Calu3 (cell line): ENCODE measurements at regions of chr15 and their contacts with region 1.

Region 1: DNA sequence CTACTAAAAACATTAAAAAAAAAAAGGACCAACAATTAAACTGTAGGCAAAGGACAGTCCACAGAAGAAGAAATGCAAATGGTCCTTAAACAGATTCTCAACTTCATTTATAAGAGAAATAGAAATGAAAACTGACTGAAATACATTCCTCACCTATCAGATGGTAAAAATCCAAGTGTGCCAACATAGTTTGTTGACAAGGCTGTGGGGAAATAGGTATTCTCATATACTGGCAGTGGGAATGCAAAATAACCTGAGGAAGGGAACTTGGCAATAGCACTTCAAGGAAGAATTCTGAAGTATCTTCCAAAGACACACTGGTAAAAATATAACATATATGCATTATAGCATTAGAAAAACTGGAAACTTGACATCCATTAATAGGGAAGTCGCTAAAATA is 53.8 kb downstream of the SLC24A1 start:
- DNase-seq: no peak
- H3K4me3 Mint-ChIP-seq: no peak overlapping the region
- H3K27ac Mint-ChIP-seq: no peak overlapping the region
- H3K4me1 Mint-ChIP-seq: no peaks in the 10 kb centered on the region
- H3K27me3 Mint-ChIP-seq: no peaks in the 10 kb centered on the region
- CTCF ChIP-seq: no peak

Region 2: DNA sequence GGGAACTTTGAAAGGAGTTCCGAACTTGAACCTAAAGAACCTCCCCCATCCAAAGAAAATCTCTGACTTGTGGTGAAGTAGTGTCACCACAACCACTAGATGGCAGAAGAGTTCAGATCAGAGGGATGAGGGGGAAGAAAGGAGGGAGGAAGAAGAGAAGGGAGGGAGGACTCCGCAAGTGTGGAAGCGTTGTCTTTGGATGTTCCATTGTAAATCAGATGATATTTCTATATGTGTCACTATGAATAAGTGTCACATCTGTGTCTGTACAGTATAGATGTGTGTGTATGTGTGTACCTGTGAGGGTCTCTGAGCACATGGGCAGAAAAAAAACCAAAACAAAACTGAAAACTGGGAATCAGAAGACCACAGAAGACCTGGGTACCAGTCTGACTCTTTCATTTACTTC is 36.9 kb before region 1 on chr15:
- CTCF ChIA-PET with region 1: no interaction called
- intact Hi-C with region 1: no loop called
- DNase-seq: peak; percentile 58
- H3K4me3 Mint-ChIP-seq: no peak overlapping the region
- H3K27ac Mint-ChIP-seq: no peak overlapping the region
- H3K4me1 Mint-ChIP-seq: peaks cover 12% of the 10 kb centered on the region
- H3K27me3 Mint-ChIP-seq: peaks cover 10% of the 10 kb centered on the region
- CTCF ChIP-seq: peak; percentile 65

Region 3: GRCh38 chr15:65747265-65747664 is 71.7 kb after region 1 on chr15:
- CTCF ChIA-PET with region 1: no interaction called
- intact Hi-C with region 1: loop called (anchors 5 kb)
- DNase-seq: no peak
- H3K4me3 Mint-ChIP-seq: no peak overlapping the region
- H3K27ac Mint-ChIP-seq: no peak overlapping the region
- H3K4me1 Mint-ChIP-seq: no peaks in the 10 kb centered on the region
- H3K27me3 Mint-ChIP-seq: no peaks in the 10 kb centered on the region
- CTCF ChIP-seq: no peak